Transverse colon (tissue), 4 donors: ENCODE measurements at regions of chr16 and their contacts with region 1.

Region 1: DNA sequence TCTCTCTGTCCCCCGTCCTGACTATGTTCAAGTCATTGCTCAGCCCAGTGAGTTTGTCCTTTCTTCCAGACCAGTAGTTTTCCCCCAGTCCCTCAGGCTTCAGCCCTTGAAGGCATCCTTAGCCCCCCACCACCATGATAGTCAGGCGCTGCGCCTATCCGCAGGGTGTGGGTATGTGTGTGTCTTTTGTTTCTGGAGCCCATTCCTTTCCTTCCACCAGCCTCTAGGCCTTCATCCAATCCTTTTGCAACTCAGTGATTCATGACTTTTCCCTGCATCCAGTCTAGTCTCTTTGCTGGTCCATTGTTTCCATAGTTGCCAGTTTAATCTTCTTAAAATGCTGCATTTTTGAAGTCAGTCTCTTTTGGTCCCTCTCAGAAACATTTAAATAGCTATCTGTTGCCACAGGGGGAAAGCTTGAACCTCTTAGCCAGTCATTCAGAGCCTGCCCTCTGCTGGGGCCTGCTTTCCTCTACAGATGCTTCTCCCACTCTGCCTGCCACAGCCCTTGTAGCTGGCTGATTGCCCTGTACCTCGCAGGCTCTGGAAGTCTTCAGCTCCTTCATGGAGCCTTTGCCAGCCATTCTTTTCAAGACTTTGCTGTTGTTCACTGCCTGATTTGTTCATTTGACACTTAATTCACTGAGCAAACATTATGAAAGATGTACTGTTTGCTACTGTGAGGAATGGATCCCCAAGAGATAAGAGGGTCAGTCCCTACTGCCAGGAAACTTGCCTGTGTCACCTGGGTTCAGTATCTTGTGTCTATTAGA is 55.9 kb upstream of the ADCY7 start:
- DNase-seq: peak; percentile 82
- H3K4me3 ChIP-seq: no peak overlapping the region
- H3K27ac ChIP-seq: peak overlapping the region; percentile 59 to 70 (median 68)
- H3K4me1 ChIP-seq: peaks cover 32 to 45% (median 36%) of the 10 kb centered on the region in 4 donors
- H3K27me3 ChIP-seq: no peaks in the 10 kb centered on the region
- CTCF ChIP-seq: peak; percentile 62 to 84 (median 65)
- EP300 ChIP-seq: no peak
- POLR2A ChIP-seq: no peak

Region 2: DNA sequence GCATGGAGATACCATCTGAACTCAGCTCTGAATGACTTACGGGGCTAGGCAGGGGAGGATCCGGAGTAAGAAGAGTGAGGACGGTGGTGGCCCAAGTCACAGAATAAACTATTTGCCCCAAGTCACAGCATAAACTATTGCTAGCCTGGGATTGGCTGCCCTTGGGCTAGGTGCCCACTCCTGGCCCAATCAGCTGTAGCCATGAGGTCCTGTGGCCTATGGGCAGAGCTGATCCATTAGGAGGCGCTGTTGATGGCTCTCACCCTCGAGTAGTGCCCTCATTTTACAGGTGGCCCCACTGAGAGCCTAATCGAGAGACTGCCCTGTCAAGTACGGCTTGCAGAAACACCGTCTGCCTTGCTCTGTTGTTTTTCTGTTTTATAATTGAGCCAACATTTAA is 292.2 kb before region 1 on chr16:
- in situ Hi-C with region 1: no loop called
- intact Hi-C with region 1: no loop called
- DNase-seq: no peak
- H3K4me3 ChIP-seq: no peak overlapping the region
- H3K27ac ChIP-seq: no peak overlapping the region
- H3K4me1 ChIP-seq: no peaks in the 10 kb centered on the region
- H3K27me3 ChIP-seq: no peaks in the 10 kb centered on the region
- CTCF ChIP-seq: no peak
- EP300 ChIP-seq: no peak
- POLR2A ChIP-seq: no peak

Region 3: DNA sequence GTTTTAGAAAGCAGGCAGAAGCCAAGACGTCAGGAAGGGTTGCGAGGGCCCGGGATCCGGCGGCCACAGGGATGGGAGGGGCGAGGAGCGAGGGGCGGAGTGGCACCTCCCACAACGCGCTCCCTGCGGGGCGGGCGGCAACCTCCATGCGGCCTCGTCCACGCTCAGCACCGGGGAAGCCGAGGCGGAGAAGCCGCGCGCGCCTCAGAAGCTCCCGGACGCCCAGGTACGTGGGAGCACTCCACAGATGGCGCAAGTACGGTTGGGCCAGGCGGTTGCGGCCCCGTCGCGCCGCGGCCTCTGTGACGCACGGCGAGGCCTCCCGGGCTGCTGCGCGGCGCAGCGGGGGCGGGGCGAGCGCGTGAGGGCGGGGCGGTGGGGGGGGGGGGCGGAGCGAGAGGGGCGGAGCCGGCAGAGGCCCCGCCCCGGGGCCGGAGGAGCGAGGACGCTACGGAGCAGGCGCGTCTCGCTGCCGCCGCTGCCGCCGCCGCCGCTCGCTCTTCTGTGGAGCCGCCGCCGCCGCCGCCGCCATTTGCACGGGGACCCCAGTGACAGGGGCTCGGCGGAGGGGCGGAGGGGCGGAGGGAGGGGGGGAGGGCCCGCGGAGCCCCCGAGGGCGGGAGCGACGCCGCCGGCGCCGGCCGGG is 57.5 kb before region 1 on chr16 and contains the start of gene TENT4B:
- in situ Hi-C with region 1: no loop called
- intact Hi-C with region 1: loop called (anchors 5 kb)
- DNase-seq: peak; percentile 91
- H3K4me3 ChIP-seq: peak within 1 kb of the TSS; percentile 84 to 97 (median 92)
- H3K27ac ChIP-seq: peak within 1 kb of the TSS; percentile 94 to 99 (median 98)
- H3K4me1 ChIP-seq: peaks cover 15 to 43% (median 31%) of the 10 kb centered on the region in 4 donors
- H3K27me3 ChIP-seq: no peaks in the 10 kb centered on the region
- CTCF ChIP-seq: no peak
- EP300 ChIP-seq: no peak
- POLR2A ChIP-seq: peak; percentile 75
- total RNA-seq, gene TENT4B: 8.2 to 18.0 (median 13.0) TPM

Region 4: GRCh38 chr16:50354629-50355456 is 144.4 kb after region 1 on chr16:
- in situ Hi-C with region 1: loop called in 2 of 4 experiments (anchors 10 kb)
- intact Hi-C with region 1: loop called (anchors 10 kb)
- DNase-seq: no peak
- H3K4me3 ChIP-seq: no peak overlapping the region
- H3K27ac ChIP-seq: peak overlapping the region; percentile 6 to 44 (median 32)
- H3K4me1 ChIP-seq: peaks cover 0 to 3% (median 0%) of the 10 kb centered on the region in 4 donors
- H3K27me3 ChIP-seq: no peaks in the 10 kb centered on the region
- CTCF ChIP-seq: peak; percentile 55 to 63 (median 59)
- EP300 ChIP-seq: no peak
- POLR2A ChIP-seq: no peak

Region 5: GRCh38 chr16:50467943-50468760 is 257.7 kb after region 1 on chr16:
- in situ Hi-C with region 1: no loop called
- intact Hi-C with region 1: no loop called
- DNase-seq: peak; percentile 11
- H3K4me3 ChIP-seq: peak overlapping the region; percentile 10 to 43 (median 28)
- H3K27ac ChIP-seq: peak overlapping the region in 1 of 4 donors; percentile 6
- H3K4me1 ChIP-seq: peaks cover 0 to 10% (median 7%) of the 10 kb centered on the region in 4 donors
- H3K27me3 ChIP-seq: peaks cover 25% of the 10 kb centered on the region
- CTCF ChIP-seq: no peak
- EP300 ChIP-seq: no peak
- POLR2A ChIP-seq: no peak

Region 6: GRCh38 chr16:50603206-50604064 is 393.0 kb after region 1 on chr16:
- in situ Hi-C with region 1: no loop called
- intact Hi-C with region 1: no loop called
- DNase-seq: peak; percentile 33
- H3K4me3 ChIP-seq: no peak overlapping the region
- H3K27ac ChIP-seq: peak overlapping the region; percentile 65 to 86 (median 80)
- H3K4me1 ChIP-seq: peaks cover 29 to 55% (median 41%) of the 10 kb centered on the region in 4 donors
- H3K27me3 ChIP-seq: no peaks in the 10 kb centered on the region
- CTCF ChIP-seq: no peak
- EP300 ChIP-seq: no peak
- POLR2A ChIP-seq: no peak